ENCODE measurements at regions of chr20 and their contacts with region 1.

Region 1: DNA sequence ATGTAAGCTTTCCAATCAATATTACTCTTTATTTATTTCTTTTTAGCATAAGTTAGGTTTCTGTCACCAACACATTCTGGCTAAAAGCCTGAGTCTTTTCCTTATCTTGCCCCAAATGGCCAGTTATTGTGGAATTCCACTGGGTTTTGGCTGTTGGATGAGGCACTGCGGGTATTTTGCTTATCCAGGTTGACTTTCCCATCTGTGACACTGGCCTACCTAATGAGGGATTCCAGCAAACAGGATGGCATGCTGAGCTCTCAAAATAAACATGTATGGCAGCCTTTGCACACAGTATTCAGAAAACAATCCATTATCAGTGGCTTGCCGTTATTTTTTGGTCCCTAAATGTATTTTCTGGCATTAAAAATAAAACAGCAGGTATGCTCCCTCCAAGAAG is 6.5 kb upstream of the RALGAPB start:
- DNase-seq: no peak
- H3K4me3 ChIP-seq: no peak overlapping the region
- H3K27ac ChIP-seq: no peak overlapping the region
- H3K4me1 ChIP-seq: no peaks in the 10 kb centered on the region
- H3K27me3 ChIP-seq: no peaks in the 10 kb centered on the region
- CTCF ChIP-seq: no peak
- EP300 ChIP-seq: no peak
- RAD21 ChIP-seq: no peak

Region 2: GRCh38 chr20:38446441-38447209 is 19.5 kb before region 1 on chr20:
- CTCF ChIA-PET with region 1: interaction called, 46 read pairs
- POLR2A ChIA-PET with region 1: interaction called, 4 read pairs
- DNase-seq: peak; percentile 94
- H3K4me3 ChIP-seq: peak overlapping the region; percentile 87 to 88
- H3K27ac ChIP-seq: peak overlapping the region; percentile 68 to 79
- H3K4me1 ChIP-seq: peaks cover 10 to 13% of the 10 kb centered on the region in 2 experiments; a peak in 1 of 4 replicates
- H3K27me3 ChIP-seq: no peaks in the 10 kb centered on the region
- CTCF ChIP-seq: peak; percentile 90
- EP300 ChIP-seq: peak in 1 of 2 experiments; percentile 34; a peak in 1 of 4 replicates
- RAD21 ChIP-seq: peak; percentile 53